BJ (cell line): ENCODE measurements at regions of chr2 and their contacts with region 1.

Region 1: GRCh38 chr2:221573430-221574230 is 1.5 kb upstream of the EPHA4 start:
- DNase-seq: no peak
- H3K4me3 ChIP-seq: peak overlapping the region; percentile 75
- H3K27me3 ChIP-seq: peaks cover 2% of the 10 kb centered on the region; the same call in 1 of the 2 replicates
- CTCF ChIP-seq: peak; percentile 87

Region 2: DNA sequence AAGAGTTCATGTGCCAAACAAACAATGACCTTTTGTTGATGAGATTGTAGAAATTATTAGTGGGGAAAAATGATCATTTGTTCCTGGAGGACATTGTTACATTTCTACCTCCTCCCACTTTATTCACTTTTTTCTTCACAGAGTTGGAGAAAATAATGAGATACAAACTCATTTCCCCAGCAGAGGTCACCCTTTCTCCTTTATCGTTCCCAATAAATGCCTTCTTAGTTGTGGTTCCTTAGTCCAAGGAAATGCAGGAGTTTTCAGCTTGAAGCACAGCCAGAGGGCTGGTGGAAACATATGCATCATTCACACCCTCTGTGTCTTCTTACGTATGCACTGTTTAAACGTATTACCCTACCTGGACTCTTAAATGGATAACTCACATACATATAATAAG is 1837.4 kb before region 1 on chr2:
- CTCF ChIA-PET with region 1: interaction called, 31 read pairs
- POLR2A ChIA-PET with region 1: no interaction called
- DNase-seq: peak; percentile 32
- H3K4me3 ChIP-seq: no peak overlapping the region
- H3K27me3 ChIP-seq: no peaks in the 10 kb centered on the region
- CTCF ChIP-seq: peak; percentile 47

Region 3: DNA sequence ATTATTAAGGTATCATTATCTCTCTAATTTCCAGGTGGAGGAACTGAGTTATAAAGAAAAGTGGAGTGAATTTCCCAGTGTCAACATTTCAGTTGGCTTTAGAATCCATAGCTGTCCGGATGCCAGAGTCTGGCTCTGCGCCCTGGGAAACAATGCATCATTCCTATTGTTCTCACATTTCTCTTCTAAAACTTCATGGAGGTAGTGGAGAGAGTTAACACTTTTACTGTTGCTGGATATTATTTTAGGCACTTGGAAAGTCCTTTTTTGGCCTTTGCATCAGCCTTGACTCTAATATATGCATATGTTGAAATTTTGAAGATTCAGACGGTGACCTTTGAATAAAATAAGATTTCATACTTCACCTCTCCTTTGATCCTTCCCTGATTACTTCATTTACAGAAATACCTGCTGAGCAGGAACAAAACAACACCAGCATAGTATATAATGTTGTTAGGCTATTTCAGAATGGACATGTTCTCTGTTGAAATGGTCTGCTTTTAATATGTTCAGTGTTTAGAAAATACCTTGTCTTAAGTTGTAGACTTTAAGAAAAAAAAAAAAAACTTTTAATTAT is 150.3 kb before region 1 on chr2:
- CTCF ChIA-PET with region 1: no interaction called
- POLR2A ChIA-PET with region 1: interaction called, 10 read pairs
- DNase-seq: no peak
- H3K4me3 ChIP-seq: no peak overlapping the region
- H3K27me3 ChIP-seq: no peaks in the 10 kb centered on the region
- CTCF ChIP-seq: no peak

Region 4: DNA sequence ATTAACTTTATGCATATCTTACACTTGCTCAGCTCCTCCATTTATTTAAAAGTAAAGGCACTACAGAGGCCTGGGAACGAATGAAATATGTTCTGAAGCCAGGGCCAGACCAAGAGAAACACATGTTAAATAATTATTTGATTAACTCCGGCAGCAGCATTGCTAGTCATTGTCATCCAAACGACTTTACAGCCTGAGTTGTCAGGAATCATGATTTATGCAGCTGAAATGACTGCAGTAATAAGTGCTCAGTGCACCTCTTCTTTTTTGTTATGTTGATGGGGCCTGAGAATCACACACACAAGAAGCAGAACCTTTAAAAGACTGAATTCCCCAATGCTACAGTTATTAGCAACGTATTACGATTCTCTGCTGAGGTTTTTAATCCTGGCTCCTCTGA is 60.4 kb before region 1 on chr2:
- CTCF ChIA-PET with region 1: no interaction called
- POLR2A ChIA-PET with region 1: no interaction called
- DNase-seq: no peak
- H3K4me3 ChIP-seq: no peak overlapping the region
- H3K27me3 ChIP-seq: no peaks in the 10 kb centered on the region
- CTCF ChIP-seq: no peak

Region 5: DNA sequence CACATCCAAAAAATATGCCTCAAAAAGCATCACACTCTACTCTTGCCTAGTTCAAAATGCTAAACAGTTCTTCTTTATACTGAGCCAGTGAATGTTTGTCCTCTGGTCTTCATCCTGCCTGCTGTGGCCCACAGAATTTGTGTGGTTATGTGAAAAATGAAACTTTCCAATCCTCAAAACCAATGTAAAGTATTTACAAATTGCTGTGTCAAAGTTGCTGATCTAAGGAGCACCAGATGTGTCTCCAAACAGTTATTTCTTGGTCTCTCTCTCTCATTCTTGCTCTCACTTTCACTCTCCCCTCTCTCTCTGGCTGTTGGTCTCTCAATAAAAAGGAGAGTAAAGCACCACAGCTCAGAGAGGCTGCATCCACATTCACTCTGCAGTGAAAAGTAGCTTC is 24.5 kb before region 1 on chr2:
- CTCF ChIA-PET with region 1: no interaction called
- POLR2A ChIA-PET with region 1: no interaction called
- DNase-seq: no peak
- H3K4me3 ChIP-seq: no peak overlapping the region
- H3K27me3 ChIP-seq: no peaks in the 10 kb centered on the region
- CTCF ChIP-seq: no peak